Prostate gland (tissue), 2 donors: ENCODE measurements at regions of chr10 and their contacts with region 1.

Region 1: DNA sequence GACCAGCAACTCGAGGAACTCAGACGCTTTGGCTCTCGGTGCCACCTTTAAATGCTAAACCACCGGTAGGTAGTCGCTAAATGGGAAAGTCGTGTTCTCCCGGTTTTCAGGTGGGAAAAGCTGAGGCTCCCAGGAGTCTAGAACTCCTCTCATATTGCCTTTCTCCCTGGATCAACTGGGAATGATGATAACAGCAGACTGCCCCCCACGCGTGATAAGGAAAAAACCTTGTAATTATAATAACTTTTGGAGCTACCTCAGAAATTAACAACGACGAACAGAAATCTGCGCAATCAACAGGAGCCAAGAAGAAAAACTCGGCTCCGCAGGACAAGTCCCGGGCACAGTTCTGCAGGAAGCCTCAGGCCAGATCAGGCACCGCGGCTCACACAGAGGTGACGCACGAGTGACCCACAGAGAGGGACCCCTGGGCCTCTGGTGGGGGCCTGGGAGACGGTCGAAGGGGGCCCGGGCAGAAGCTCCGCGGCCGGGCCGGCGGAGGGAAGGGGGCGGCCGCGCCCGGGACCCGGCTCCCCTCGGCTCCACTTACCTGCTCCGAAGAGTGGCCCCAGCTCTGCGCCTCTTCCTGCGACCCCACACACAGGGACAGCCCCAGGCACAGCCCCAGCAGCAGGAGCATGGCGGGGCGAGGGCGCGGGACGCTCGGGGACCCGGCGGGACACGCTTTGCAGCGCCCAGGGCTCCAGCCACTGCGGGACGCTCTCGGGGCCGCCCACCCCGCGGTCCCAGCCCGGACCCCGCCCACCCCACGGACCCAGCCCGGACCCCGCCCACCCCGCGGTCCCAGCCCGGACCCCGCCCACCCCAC is at the start of gene ITIH5:
- DNase-seq: no peak
- H3K4me3 ChIP-seq: peak within 1 kb of the TSS; percentile 52 to 62
- H3K27ac ChIP-seq: peak within 1 kb of the TSS; percentile 16 to 42
- H3K4me1 ChIP-seq: no peaks in the 10 kb centered on the region
- H3K27me3 ChIP-seq: no peaks in the 10 kb centered on the region
- CTCF ChIP-seq: no peak
- POLR2A ChIP-seq: no peak
- total RNA-seq, gene ITIH5: 13.5 to 42.0 TPM

Region 2: GRCh38 chr10:6843481-6843881 is 823.0 kb before region 1 on chr10:
- intact Hi-C with region 1: no loop called
- DNase-seq: no peak
- H3K4me3 ChIP-seq: no peak overlapping the region
- H3K27ac ChIP-seq: no peak overlapping the region
- H3K4me1 ChIP-seq: no peaks in the 10 kb centered on the region
- H3K27me3 ChIP-seq: no peaks in the 10 kb centered on the region
- CTCF ChIP-seq: no peak
- POLR2A ChIP-seq: no peak

Region 3: DNA sequence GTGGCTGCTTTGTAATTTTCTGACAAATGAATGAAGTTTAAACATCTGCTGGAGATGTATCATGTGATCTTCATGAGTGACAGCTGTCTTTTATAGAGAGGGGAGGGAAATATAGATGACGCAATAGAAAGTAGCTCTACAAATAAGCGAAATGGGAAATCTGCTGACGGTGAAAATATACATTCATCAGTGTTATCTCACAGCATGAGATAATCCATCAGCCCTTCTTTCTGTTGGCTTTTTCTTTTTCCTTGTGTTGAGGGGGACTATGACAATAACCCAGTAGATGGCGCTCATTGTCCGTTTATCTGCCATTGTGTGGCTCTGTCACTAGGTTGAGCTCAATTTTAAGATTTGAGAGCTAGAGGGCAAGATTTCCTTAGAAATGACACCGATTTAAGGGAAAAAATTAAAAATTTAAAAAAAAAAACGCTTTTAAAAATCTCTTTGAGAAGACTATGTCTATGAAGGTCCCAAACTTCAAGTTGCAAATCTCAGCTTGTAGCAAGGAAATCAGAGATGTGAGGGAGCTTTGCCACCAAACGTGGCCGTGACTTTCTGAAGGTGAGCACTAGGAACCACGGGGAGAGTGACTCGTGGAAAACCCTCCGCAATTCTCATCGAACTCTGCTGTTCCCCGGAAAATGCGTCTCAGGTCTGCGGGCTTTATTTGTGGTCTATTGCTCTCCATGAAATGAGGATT is 141.0 kb before region 1 on chr10:
- intact Hi-C with region 1: loop called (anchors 5 kb)
- DNase-seq: peak; percentile 58
- H3K4me3 ChIP-seq: no peak overlapping the region
- H3K27ac ChIP-seq: no peak overlapping the region
- H3K4me1 ChIP-seq: no peaks in the 10 kb centered on the region
- H3K27me3 ChIP-seq: peaks cover 3% of the 10 kb centered on the region
- CTCF ChIP-seq: peak; percentile 33 to 91 (median 84)
- POLR2A ChIP-seq: no peak

Region 4: GRCh38 chr10:7541137-7542095 is 125.1 kb before region 1 on chr10:
- intact Hi-C with region 1: loop called (anchors 5 kb)
- DNase-seq: no peak
- H3K4me3 ChIP-seq: no peak overlapping the region
- H3K27ac ChIP-seq: no peak overlapping the region
- H3K4me1 ChIP-seq: no peaks in the 10 kb centered on the region
- H3K27me3 ChIP-seq: no peaks in the 10 kb centered on the region
- CTCF ChIP-seq: no peak
- POLR2A ChIP-seq: no peak

Region 5: GRCh38 chr10:7606951-7607404 is 59.5 kb before region 1 on chr10:
- intact Hi-C with region 1: loop called (anchors 10 kb)
- DNase-seq: no peak
- H3K4me3 ChIP-seq: no peak overlapping the region
- H3K27ac ChIP-seq: no peak overlapping the region
- H3K4me1 ChIP-seq: no peaks in the 10 kb centered on the region
- H3K27me3 ChIP-seq: no peaks in the 10 kb centered on the region
- CTCF ChIP-seq: no peak
- POLR2A ChIP-seq: no peak